ENCODE measurements at regions of chr6 and their contacts with region 1.

Region 1: DNA sequence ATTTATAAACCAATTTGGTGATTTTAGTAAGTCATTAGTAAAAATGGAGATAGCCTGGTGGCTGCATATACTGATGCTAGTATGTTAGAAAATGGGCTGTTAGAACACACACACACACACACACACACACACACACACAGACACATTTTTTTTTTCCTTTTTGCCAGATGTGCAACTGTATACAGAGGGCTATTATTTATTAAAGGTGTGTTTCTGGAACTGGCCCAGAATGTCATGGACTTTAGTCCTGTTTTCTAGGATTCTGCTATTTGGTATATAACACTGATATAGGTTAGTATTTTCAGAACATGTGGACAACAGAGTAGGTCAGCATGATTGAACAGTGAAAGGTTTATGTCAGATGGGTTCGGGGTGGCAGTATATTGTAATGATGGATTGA is 12.4 kb downstream of the MYO6 start:
- DNase-seq: no peak
- H3K4me3 ChIP-seq: no peak overlapping the region
- H3K27ac ChIP-seq: no peak overlapping the region
- H3K4me1 ChIP-seq: no peaks in the 10 kb centered on the region
- H3K27me3 ChIP-seq: no peaks in the 10 kb centered on the region
- CTCF ChIP-seq: no peak

Region 2: GRCh38 chr6:75458895-75459294 is 302.6 kb before region 1 on chr6:
- CTCF ChIA-PET with region 1: no interaction called
- POLR2A ChIA-PET with region 1: no interaction called
- intact Hi-C with region 1: no loop called
- DNase-seq: no peak
- H3K4me3 ChIP-seq: no peak overlapping the region
- H3K27ac ChIP-seq: no peak overlapping the region
- H3K4me1 ChIP-seq: no peaks in the 10 kb centered on the region
- H3K27me3 ChIP-seq: no peaks in the 10 kb centered on the region
- CTCF ChIP-seq: no peak

Region 3: DNA sequence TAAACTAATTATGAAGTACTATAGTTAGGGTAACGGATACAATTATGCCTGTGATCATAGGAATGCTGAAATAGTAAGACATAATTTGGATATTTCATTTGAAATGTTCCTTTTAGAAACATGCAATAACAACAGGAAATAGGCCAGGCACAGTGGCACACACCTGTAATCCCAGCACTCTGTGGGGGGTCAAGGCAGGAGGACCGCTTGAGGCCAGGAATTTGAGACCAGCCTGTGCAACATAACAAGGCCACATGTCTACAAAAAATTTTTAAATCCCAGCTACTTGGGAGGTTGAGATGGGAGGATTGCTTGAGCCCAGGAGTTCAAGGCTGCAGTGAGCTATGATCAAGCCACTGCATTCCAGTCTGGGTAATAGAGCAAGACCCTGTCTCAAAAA is 38.1 kb before region 1 on chr6:
- CTCF ChIA-PET with region 1: no interaction called
- POLR2A ChIA-PET with region 1: no interaction called
- intact Hi-C with region 1: no loop called
- DNase-seq: no peak
- H3K4me3 ChIP-seq: no peak overlapping the region
- H3K27ac ChIP-seq: no peak overlapping the region
- H3K4me1 ChIP-seq: no peaks in the 10 kb centered on the region
- H3K27me3 ChIP-seq: no peaks in the 10 kb centered on the region
- CTCF ChIP-seq: no peak

Region 4: DNA sequence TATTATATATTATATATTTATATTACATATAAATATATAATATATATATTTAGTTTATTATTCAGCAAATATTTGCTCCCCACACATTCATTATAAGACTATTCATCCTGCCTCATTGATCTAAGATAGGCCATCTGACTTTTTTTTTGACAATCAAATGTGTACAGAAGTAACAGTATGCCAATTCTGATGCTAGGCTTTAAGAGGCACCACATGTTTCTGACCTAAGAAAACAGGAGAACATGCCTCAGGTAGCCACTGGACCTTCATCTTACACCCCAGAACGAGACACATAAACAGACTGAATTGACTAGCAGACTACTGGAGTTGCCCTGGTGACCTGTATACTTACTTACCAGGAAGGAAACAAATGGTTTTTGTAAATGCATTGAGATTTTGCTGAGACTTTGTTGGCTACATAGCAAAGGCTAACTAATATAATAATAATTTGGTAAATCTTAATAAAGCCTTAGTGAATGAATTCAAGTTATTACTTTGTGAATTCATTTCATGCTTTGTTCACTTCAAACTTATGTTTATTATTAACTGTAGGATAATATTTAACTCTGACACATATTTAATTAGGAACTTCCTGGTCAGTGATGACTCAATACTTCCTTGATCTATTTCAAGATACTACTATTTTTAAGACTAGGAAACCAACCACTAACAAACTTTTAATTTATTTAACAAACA is 25.9 kb before region 1 on chr6:
- CTCF ChIA-PET with region 1: no interaction called
- POLR2A ChIA-PET with region 1: interaction called, 11 read pairs
- intact Hi-C with region 1: no loop called
- DNase-seq: peak; percentile 35 to 83
- H3K4me3 ChIP-seq: peak overlapping the region; percentile 8; the same call in 1 of the 2 replicates
- H3K27ac ChIP-seq: peak overlapping the region; percentile 92
- H3K4me1 ChIP-seq: peaks cover 23% of the 10 kb centered on the region
- H3K27me3 ChIP-seq: no peaks in the 10 kb centered on the region
- CTCF ChIP-seq: no peak

Region 5: DNA sequence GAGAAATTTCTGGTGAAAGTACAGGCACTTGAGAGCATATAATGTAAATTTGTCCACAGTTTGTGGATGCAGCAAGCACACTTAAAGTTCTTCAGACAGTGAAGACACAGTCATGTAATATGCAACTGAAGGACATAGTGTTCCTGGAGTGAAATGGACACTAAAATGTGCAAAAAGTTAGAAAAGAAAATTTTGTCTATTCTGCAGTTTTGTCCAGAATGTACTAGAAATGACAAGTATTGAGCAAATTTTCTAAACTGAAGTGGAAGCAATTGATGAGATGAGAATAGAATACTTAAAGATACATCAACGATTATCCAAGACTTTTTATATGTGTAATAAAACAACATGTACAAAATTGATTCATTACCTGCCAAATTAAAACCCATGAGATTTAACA is 958.0 kb after region 1 on chr6:
- CTCF ChIA-PET with region 1: no interaction called
- POLR2A ChIA-PET with region 1: no interaction called
- intact Hi-C with region 1: no loop called
- DNase-seq: no peak
- H3K4me3 ChIP-seq: no peak overlapping the region
- H3K27ac ChIP-seq: no peak overlapping the region
- H3K4me1 ChIP-seq: no peaks in the 10 kb centered on the region
- H3K27me3 ChIP-seq: no peaks in the 10 kb centered on the region
- CTCF ChIP-seq: no peak

Measured in PC-9 (cell line).